KBM-7 (cell line): ENCODE measurements at regions of chr7 and their contacts with region 1.

Region 1: GRCh38 chr7:24819916-24820689 is 62.8 kb upstream of the GSDME start:
- DNase-seq: peak; percentile 87

Region 2: DNA sequence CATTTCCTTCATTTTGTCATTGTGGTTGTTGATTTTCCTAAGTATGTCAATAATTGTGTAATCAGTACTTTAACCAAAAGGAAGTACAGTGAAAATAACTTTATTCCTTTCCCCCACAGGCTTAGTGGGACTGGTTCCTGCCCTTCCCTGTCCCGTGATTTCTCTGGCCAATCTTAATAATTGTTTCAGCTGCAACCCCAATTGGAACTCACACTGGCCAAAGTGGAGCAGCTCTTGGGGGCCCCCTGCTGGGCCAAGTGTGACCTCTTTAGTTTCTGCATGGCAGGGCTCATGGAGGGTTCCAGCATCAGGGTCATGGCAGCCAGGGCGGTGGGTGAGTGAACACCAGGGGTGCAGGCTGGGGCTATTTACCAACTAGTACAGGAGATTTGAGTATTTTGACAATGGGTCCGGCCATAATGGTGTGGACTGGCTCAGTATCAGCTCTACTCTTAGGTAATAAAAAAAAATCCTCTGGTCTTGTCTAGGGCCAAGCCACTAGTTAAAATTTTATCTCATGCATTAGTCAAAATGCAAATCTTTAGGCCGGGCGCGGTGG is 273.2 kb after region 1 on chr7:
- in situ Hi-C with region 1: loop called (anchors 25 kb)
- DNase-seq: peak; percentile 77